H1 (cell line): ENCODE measurements at regions of chr1 and their contacts with region 1.

Region 1: GRCh38 chr1:27934818-27935549 is at the start of gene SMPDL3B:
- DNase-seq: peak; percentile 86 to 88
- H3K4me3 ChIP-seq: peak within 1 kb of the TSS; percentile 66 to 89 (median 68)
- H3K27ac ChIP-seq: peak within 1 kb of the TSS; percentile 51; the same call in 1 of the 2 replicates
- H3K4me1 ChIP-seq: peaks cover 17 to 26% (median 22%) of the 10 kb centered on the region in 4 experiments
- H3K27me3 ChIP-seq: no peaks in the 10 kb centered on the region
- CTCF ChIP-seq: peak; percentile 26 to 37 (median 35)
- EP300 ChIP-seq: 0 out of 3 replicates have a peak, but pooled peaks of 1 of the 2 experiments have one; percentile 12
- POLR2A ChIP-seq: peak; percentile 72 to 91
- RAD21 ChIP-seq: peak; percentile 17 to 24; a peak in 3 of 4 replicates
- total RNA-seq, gene SMPDL3B: 53.1 and 54.7 TPM in 2 replicates

Region 2: GRCh38 chr1:27959400-27960217 is 24.6 kb after region 1 on chr1 and contains the start of gene XKR8:
- CTCF ChIA-PET with region 1: interaction called, 46 read pairs
- POLR2A ChIA-PET with region 1: interaction called, 13 read pairs
- DNase-seq: peak; percentile 70 to 92
- H3K4me3 ChIP-seq: peak within 1 kb of the TSS; percentile 70 to 80 (median 72)
- H3K27ac ChIP-seq: peak within 1 kb of the TSS; percentile 84
- H3K4me1 ChIP-seq: peaks cover 0 to 11% (median 8%) of the 10 kb centered on the region in 4 experiments; a peak in 6 of 7 replicates
- H3K27me3 ChIP-seq: no peaks in the 10 kb centered on the region
- CTCF ChIP-seq: peak in 1 of 3 experiments; percentile 77; a peak in 2 of 4 replicates
- EP300 ChIP-seq: no peak
- POLR2A ChIP-seq: peak; percentile 37 to 78
- RAD21 ChIP-seq: no peak
- total RNA-seq, gene XKR8: 13.8 and 14.2 TPM in 2 replicates

Region 3: DNA sequence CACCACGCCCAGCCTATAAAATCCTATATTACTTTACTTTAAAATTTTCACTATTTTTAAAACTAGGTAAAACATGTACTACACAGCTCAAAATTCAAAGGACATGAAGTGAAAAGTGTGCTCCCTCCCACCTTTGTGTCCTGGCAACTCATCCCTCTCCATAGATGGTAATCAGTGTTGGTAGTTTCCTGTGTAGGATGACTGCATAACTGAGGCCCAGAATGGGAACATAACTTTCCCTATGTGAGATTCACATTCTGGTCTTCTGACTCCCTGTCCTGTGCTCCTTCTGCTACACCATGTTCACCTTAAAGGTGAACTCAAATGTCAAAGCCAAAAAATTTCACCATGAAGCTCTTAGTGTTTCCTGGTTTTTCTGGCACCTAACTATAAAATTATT is 64.1 kb after region 1 on chr1:
- CTCF ChIA-PET with region 1: no interaction called
- POLR2A ChIA-PET with region 1: no interaction called
- DNase-seq: no peak
- H3K4me3 ChIP-seq: no peak overlapping the region
- H3K27ac ChIP-seq: no peak overlapping the region
- H3K4me1 ChIP-seq: no peaks in the 10 kb centered on the region
- H3K27me3 ChIP-seq: no peaks in the 10 kb centered on the region
- CTCF ChIP-seq: no peak
- EP300 ChIP-seq: no peak
- POLR2A ChIP-seq: no peak
- RAD21 ChIP-seq: no peak

Region 4: GRCh38 chr1:28056129-28056925 is 121.3 kb after region 1 on chr1:
- CTCF ChIA-PET with region 1: no interaction called
- POLR2A ChIA-PET with region 1: no interaction called
- DNase-seq: no peak
- H3K4me3 ChIP-seq: no peak overlapping the region
- H3K27ac ChIP-seq: no peak overlapping the region
- H3K4me1 ChIP-seq: no peaks in the 10 kb centered on the region
- H3K27me3 ChIP-seq: no peaks in the 10 kb centered on the region
- CTCF ChIP-seq: no peak
- EP300 ChIP-seq: no peak
- POLR2A ChIP-seq: no peak
- RAD21 ChIP-seq: no peak

Region 5: DNA sequence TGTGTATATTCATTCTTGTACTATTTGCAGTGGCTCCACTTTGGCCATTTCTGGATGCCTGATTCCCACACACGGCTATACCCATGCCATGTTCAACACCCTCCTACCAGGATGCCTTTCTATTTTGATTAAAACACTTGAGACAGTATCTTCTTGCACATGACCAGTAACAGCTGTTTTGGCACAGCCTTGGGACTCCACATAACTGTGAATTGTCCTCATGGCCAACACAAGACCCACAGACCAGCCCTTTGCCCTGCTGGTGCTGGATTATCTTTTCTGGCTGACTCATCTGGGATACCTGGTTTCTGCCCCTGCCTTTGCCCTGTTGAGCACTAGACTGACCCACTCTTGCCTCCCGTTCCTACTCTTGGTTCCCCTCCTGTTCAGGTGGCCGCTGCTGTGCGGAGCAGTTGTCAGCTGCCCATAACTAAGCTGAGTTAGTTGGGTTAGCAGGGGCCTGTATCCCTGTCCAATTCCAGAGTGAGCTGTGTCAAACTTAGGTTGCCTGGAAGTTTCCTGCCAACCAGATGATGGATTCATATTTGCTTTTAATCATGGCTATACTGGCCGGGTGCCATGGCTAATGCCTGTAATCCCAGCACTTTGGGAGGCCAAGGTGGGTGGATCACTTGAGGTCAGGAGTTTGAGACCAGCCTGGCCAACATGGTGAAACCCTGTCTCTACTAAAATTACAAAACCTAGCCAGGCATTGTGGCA is 164.2 kb after region 1 on chr1:
- CTCF ChIA-PET with region 1: no interaction called
- POLR2A ChIA-PET with region 1: no interaction called
- DNase-seq: peak in 1 of 2 experiments; percentile 28
- H3K4me3 ChIP-seq: no peak overlapping the region
- H3K27ac ChIP-seq: no peak overlapping the region
- H3K4me1 ChIP-seq: no peaks in the 10 kb centered on the region
- H3K27me3 ChIP-seq: no peaks in the 10 kb centered on the region
- CTCF ChIP-seq: no peak
- EP300 ChIP-seq: no peak
- POLR2A ChIP-seq: no peak
- RAD21 ChIP-seq: no peak